SK-N-SH (cell line): ENCODE measurements at regions of chr17 and their contacts with region 1.

Region 1: DNA sequence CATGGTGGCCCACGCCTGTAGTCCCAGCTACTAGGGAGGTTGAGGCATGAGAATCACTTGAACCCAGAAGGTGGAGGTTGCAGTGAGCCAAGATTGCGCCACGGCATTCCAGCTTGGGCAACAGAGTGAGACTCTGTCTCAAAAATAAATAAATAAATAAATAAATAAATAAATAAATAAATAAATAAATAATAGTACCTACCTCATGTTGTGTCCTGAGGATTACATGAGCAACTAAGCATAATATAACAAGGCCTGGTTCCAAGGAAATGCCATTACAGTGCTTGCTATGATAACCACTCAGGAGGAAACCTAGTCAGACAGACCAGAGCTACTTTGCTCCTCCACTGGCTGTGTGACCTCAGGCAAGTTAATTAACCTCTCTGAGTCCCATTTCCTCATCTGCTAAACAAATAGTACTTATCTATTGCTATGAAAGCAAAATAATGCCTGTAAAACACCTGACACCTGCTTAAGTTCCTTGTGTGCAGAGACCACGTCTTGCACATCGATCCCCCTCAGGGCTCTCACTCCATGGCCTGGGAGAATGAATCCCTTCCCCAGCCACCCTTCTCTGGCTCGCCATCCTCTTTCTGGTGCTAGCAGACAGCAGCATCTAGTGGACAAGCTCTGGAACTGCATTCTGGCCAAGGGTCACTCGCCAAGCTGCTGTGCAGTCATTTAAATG is 7.5 kb downstream of the EPOP start:
- DNase-seq: peak; percentile 88
- H3K4me3 ChIP-seq: peak overlapping the region in 1 of 2 experiments; percentile 50; a peak in 1 of 4 replicates
- H3K27ac ChIP-seq: no peak overlapping the region
- H3K4me1 ChIP-seq: peaks cover 0 to 6% of the 10 kb centered on the region in 2 experiments; a peak in 1 of 4 replicates
- H3K27me3 ChIP-seq: no peaks in the 10 kb centered on the region
- CTCF ChIP-seq: peak; percentile 99
- EP300 ChIP-seq: no peak
- RAD21 ChIP-seq: peak; percentile 98

Region 2: GRCh38 chr17:38485146-38485468 is 182.1 kb before region 1 on chr17:
- CTCF ChIA-PET with region 1: interaction called, 10 read pairs
- POLR2A ChIA-PET with region 1: no interaction called
- DNase-seq: no peak
- H3K4me3 ChIP-seq: peak overlapping the region in 1 of 2 experiments; percentile 43; a peak in 1 of 4 replicates
- H3K27ac ChIP-seq: no peak overlapping the region
- H3K4me1 ChIP-seq: no peaks in the 10 kb centered on the region
- H3K27me3 ChIP-seq: no peaks in the 10 kb centered on the region
- CTCF ChIP-seq: no peak
- EP300 ChIP-seq: no peak
- RAD21 ChIP-seq: no peak

Region 3: GRCh38 chr17:38539386-38539785 is 127.9 kb before region 1 on chr17:
- CTCF ChIA-PET with region 1: interaction called, 17 read pairs
- POLR2A ChIA-PET with region 1: no interaction called
- DNase-seq: no peak
- H3K4me3 ChIP-seq: no peak overlapping the region
- H3K27ac ChIP-seq: no peak overlapping the region
- H3K4me1 ChIP-seq: no peaks in the 10 kb centered on the region
- H3K27me3 ChIP-seq: no peaks in the 10 kb centered on the region
- CTCF ChIP-seq: no peak
- EP300 ChIP-seq: no peak
- RAD21 ChIP-seq: no peak

Region 4: DNA sequence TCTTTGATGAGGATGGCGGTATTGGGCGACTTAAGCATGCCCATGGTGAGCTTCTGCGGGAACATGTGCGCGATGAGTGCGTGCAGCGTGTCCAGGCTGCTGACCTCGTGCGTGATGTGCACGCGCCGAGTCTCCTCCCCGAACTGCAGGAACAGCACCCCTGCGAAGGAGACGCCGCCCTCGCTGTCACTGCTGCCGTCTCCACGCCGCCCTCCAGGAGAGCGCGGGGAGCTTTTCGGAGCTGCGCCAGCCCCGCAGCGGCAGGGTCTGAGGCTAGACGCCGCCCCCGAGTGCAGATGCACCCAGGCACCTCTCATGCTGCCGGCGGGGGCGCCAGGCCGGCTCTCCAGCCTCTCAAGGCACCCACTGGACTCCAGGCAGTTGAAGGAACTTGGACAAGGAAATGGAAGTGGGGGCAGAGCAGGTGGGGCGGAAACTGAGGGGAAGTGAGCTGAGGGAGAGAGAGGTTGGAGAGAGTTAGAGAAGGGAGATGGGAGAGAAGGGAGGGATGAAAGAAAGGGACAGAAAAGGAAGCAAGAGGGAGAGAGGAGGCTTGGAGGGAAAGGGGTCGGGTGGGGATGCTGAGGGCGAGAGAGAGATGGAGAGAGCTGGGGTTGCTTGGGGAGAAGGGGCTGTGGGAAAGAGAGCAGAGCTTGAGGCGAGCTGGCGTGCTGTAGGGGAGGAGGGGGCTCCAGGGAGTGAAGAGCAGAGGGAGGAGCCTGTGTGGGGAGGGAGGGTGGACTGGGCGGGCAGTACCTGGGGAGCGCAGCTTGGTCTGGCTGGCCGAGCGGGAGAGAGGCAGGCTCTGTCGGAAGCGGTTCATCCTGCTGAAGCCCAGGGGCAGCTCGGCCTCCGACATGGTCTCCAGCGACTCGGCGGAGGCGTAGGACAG is 103.6 kb before region 1 on chr17:
- CTCF ChIA-PET with region 1: interaction called, 63 read pairs
- POLR2A ChIA-PET with region 1: no interaction called
- DNase-seq: no peak
- H3K4me3 ChIP-seq: no peak overlapping the region
- H3K27ac ChIP-seq: no peak overlapping the region
- H3K4me1 ChIP-seq: peaks cover 0 to 25% of the 10 kb centered on the region in 2 experiments; a peak in 2 of 4 replicates
- H3K27me3 ChIP-seq: peaks cover 9% of the 10 kb centered on the region; the same call in 1 of the 2 replicates
- CTCF ChIP-seq: no peak
- EP300 ChIP-seq: no peak
- RAD21 ChIP-seq: no peak

Region 5: GRCh38 chr17:38591759-38592241 is 75.4 kb before region 1 on chr17:
- CTCF ChIA-PET with region 1: interaction called, 30 read pairs
- POLR2A ChIA-PET with region 1: no interaction called
- DNase-seq: peak; percentile 50
- H3K4me3 ChIP-seq: no peak overlapping the region
- H3K27ac ChIP-seq: peak overlapping the region in 1 of 2 experiments; percentile 50; a peak in 1 of 4 replicates
- H3K4me1 ChIP-seq: peaks cover 6 to 33% of the 10 kb centered on the region in 2 experiments; a peak in 2 of 4 replicates
- H3K27me3 ChIP-seq: peaks cover 9% of the 10 kb centered on the region
- CTCF ChIP-seq: no peak
- EP300 ChIP-seq: no peak
- RAD21 ChIP-seq: no peak

Region 6: GRCh38 chr17:38654411-38655398 is 12.5 kb before region 1 on chr17:
- CTCF ChIA-PET with region 1: interaction called, 73 read pairs
- POLR2A ChIA-PET with region 1: no interaction called
- DNase-seq: no peak
- H3K4me3 ChIP-seq: no peak overlapping the region
- H3K27ac ChIP-seq: no peak overlapping the region
- H3K4me1 ChIP-seq: peaks cover 0 to 2% of the 10 kb centered on the region in 2 experiments; a peak in 1 of 4 replicates
- H3K27me3 ChIP-seq: peaks cover 12% of the 10 kb centered on the region
- CTCF ChIP-seq: no peak
- EP300 ChIP-seq: no peak
- RAD21 ChIP-seq: no peak

Region 7: GRCh38 chr17:38752119-38752929 is 85.1 kb after region 1 on chr17 and contains the start of gene PSMB3:
- CTCF ChIA-PET with region 1: no interaction called
- POLR2A ChIA-PET with region 1: no interaction called
- DNase-seq: peak; percentile 91
- H3K4me3 ChIP-seq: peak within 1 kb of the TSS; percentile 91 to 93
- H3K27ac ChIP-seq: peak within 1 kb of the TSS; percentile 74 to 98
- H3K4me1 ChIP-seq: peaks cover 0 to 20% of the 10 kb centered on the region in 2 experiments; a peak in 1 of 4 replicates
- H3K27me3 ChIP-seq: no peaks in the 10 kb centered on the region
- CTCF ChIP-seq: no peak
- EP300 ChIP-seq: no peak
- RAD21 ChIP-seq: no peak
- polyA plus RNA-seq, gene PSMB3: 480 and 533 TPM in 2 replicates

Region 8: DNA sequence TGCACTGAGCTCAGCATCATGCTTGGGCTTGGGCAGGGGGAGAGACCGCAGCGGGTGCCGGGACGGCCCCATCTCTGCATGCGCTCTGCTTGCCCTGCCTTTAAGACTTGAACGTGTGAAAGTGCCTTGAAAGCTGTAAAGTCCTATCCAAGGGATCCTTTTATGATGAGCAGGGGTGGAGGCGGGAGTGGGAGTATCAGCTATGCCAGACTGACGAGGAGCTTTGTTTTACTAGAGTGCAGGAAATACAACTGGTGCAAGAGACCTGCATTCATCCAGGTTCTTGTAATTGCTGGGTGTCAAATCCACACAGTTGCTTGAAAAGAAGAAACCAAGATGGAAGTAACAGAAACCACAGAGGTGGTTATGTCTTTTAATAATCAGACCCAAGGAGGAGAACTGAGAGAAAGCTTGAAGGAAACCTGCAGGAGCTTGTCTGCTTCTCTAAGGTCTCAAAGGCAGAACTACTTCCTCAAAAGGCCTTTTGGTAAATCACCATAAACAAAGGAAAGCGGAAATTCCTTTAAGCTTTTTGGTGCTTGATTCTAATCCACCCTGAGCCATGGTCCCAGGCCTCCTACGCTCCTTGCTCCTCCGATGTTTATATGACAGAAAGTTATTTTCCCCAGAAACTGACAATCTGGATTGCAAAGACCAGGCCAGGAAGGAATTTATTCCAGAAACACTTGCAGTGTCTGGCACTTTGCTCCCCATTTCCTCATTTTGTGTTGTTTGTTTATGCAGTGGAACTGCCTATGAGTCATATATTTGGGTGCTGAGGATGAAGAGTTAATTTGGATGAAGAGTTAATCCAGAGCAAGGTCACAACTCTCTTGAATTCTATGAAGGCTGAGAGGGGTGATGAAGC is 351.3 kb after region 1 on chr17:
- CTCF ChIA-PET with region 1: no interaction called
- POLR2A ChIA-PET with region 1: no interaction called
- DNase-seq: no peak
- H3K4me3 ChIP-seq: no peak overlapping the region
- H3K27ac ChIP-seq: no peak overlapping the region
- H3K4me1 ChIP-seq: no peaks in the 10 kb centered on the region
- H3K27me3 ChIP-seq: no peaks in the 10 kb centered on the region
- CTCF ChIP-seq: no peak
- EP300 ChIP-seq: no peak
- RAD21 ChIP-seq: no peak